ENCODE measurements at regions of chr10 and their contacts with region 1.

Region 1: DNA sequence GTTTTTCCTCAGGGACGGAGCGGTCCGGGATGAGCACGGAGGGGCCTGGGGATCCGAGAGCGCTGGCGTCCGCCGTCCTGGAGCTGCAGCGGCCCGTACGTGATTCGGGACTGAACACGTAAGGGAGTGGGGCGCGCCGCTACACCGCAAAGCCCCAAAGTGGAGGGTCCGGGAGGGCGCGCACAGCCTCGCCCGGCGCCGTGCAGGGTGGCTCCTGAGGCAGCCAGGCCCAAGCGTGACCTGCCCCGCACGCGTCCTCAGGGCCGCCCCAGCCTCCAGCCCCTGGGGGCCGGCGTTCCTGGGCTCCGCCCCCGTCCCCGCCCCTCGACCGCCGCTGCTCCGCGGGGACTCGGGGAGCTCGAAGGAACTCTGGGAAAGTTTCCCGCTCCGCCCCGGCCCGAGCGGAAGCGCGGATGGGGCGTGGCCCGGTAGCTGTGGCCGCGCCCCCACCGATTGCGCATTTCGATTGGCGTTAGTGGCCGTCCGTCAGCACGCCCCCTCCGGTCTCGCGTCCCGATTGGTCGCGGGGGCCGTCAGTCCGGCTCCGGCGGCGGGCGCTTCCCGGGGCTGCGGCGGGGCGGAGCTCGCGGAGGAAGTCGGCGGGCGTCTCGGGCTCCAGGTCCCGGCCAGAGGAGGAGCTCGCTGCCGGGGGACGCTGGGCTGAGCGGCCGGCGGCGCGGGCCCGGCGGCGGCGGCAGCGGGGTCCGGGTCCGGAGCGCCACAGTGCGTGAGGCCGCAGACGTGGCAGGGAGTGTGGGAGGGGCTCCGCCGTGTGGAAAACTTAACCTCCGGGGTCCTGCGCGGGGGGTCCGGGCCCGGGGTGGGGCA is at the starts of genes ANKRD16 and FBH1:
- DNase-seq: peak; percentile 78
- ATAC-seq: peak; percentile 92
- H3K4me3 ChIP-seq: peak within 1 kb of the TSS; percentile 96
- H3K27ac ChIP-seq: peak within 1 kb of the TSS; percentile 73
- H3K4me1 ChIP-seq: peaks cover 14% of the 10 kb centered on the region
- H3K27me3 ChIP-seq: no peaks in the 10 kb centered on the region
- CTCF ChIP-seq: peak in 1 of 3 experiments; percentile 2; a peak in 1 of 6 replicates
- EP300 ChIP-seq: no peak
- POLR2A ChIP-seq: peak; percentile 95
- RAD21 ChIP-seq: no peak
- polyA plus RNA-seq, gene ANKRD16: 1.4 to 2.9 TPM
- polyA plus RNA-seq, gene FBH1: 6.1 to 19.0 TPM

Region 2: GRCh38 chr10:5854106-5854570 is 35.7 kb before region 1 on chr10:
- CTCF ChIA-PET with region 1: interaction called, 3 read pairs
- POLR2A ChIA-PET with region 1: interaction called, 5 read pairs
- RAD21 ChIA-PET with region 1: interaction called, 28 read pairs
- SMC1A ChIA-PET with region 1: interaction called, 4 read pairs
- in situ Hi-C with region 1: no loop called
- intact Hi-C with region 1: no loop called
- DNase-seq: no peak
- ATAC-seq: no peak
- H3K4me3 ChIP-seq: no peak overlapping the region
- H3K27ac ChIP-seq: no peak overlapping the region
- H3K4me1 ChIP-seq: peaks cover 8% of the 10 kb centered on the region
- H3K27me3 ChIP-seq: no peaks in the 10 kb centered on the region; a peak in 1 of 4 replicates
- CTCF ChIP-seq: no peak
- EP300 ChIP-seq: no peak
- POLR2A ChIP-seq: no peak
- RAD21 ChIP-seq: no peak

Region 3: GRCh38 chr10:5862360-5862961 is 27.4 kb before region 1 on chr10:
- CTCF ChIA-PET with region 1: interaction called, 3 read pairs
- POLR2A ChIA-PET with region 1: interaction called, 17 read pairs
- RAD21 ChIA-PET with region 1: interaction called, 4 read pairs
- SMC1A ChIA-PET with region 1: interaction called, 6 read pairs
- in situ Hi-C with region 1: no loop called
- intact Hi-C with region 1: no loop called
- DNase-seq: peak; percentile 94
- ATAC-seq: peak; percentile 96
- H3K4me3 ChIP-seq: peak overlapping the region; percentile 34
- H3K27ac ChIP-seq: peak overlapping the region; percentile 73
- H3K4me1 ChIP-seq: peaks cover 20% of the 10 kb centered on the region
- H3K27me3 ChIP-seq: no peaks in the 10 kb centered on the region
- CTCF ChIP-seq: no peak
- EP300 ChIP-seq: peak; percentile 74 to 88; a peak in 2 of 4 replicates
- POLR2A ChIP-seq: peak; percentile 46; the same call in 1 of the 2 replicates
- RAD21 ChIP-seq: no peak

Region 4: DNA sequence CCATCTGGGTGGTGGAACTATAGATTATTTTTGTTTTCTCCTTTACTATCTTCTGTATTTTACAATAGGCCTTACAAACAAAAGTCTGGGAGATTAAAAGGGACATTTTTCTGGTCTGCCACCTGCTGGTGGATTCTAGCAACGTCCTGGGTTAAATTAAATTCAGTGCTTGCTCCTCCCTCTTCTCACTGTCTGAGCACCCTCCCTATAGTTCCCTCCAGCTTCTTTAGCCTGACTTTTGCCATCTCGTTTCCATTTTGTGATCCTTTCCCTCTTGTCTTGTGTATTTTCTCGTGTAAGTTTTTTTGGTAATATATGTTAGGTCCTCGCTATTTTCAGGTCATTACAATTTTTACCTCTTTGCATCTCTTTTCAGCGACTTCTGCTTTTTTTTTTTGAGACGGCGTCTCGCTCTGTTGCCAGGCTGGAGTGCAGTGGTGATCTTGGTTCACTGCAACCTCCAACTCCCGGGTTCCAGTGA is 16.3 kb before region 1 on chr10:
- CTCF ChIA-PET with region 1: interaction called, 24 read pairs
- POLR2A ChIA-PET with region 1: interaction called, 5 read pairs
- RAD21 ChIA-PET with region 1: interaction called, 13 read pairs
- SMC1A ChIA-PET with region 1: interaction called, 24 read pairs
- in situ Hi-C with region 1: no loop called
- intact Hi-C with region 1: no loop called
- DNase-seq: peak; percentile 59
- ATAC-seq: peak; percentile 98
- H3K4me3 ChIP-seq: peak overlapping the region; percentile 26; the same call in 1 of the 2 replicates
- H3K27ac ChIP-seq: 0 out of 2 replicates have a peak overlapping the region, but pooled peaks have one; percentile 18
- H3K4me1 ChIP-seq: peaks cover 3% of the 10 kb centered on the region
- H3K27me3 ChIP-seq: no peaks in the 10 kb centered on the region
- CTCF ChIP-seq: peak; percentile 64 to 73 (median 66)
- EP300 ChIP-seq: no peak
- POLR2A ChIP-seq: no peak
- RAD21 ChIP-seq: peak; percentile 71

Region 5: GRCh38 chr10:5904227-5904626 is 14.4 kb after region 1 on chr10:
- CTCF ChIA-PET with region 1: interaction called, 5 read pairs
- POLR2A ChIA-PET with region 1: interaction called, 4 read pairs
- RAD21 ChIA-PET with region 1: interaction called, 10 read pairs
- SMC1A ChIA-PET with region 1: interaction called, 14 read pairs
- in situ Hi-C with region 1: no loop called
- intact Hi-C with region 1: no loop called
- DNase-seq: peak; percentile 68
- ATAC-seq: peak; percentile 96
- H3K4me3 ChIP-seq: 0 out of 2 replicates have a peak overlapping the region, but pooled peaks have one; percentile 39
- H3K27ac ChIP-seq: peak overlapping the region; percentile 91
- H3K4me1 ChIP-seq: peaks cover 18% of the 10 kb centered on the region
- H3K27me3 ChIP-seq: no peaks in the 10 kb centered on the region
- CTCF ChIP-seq: no peak
- EP300 ChIP-seq: 0 out of 4 replicates have a peak, but pooled peaks of 1 of the 2 experiments have one; percentile 11
- POLR2A ChIP-seq: no peak
- RAD21 ChIP-seq: no peak

Region 6: DNA sequence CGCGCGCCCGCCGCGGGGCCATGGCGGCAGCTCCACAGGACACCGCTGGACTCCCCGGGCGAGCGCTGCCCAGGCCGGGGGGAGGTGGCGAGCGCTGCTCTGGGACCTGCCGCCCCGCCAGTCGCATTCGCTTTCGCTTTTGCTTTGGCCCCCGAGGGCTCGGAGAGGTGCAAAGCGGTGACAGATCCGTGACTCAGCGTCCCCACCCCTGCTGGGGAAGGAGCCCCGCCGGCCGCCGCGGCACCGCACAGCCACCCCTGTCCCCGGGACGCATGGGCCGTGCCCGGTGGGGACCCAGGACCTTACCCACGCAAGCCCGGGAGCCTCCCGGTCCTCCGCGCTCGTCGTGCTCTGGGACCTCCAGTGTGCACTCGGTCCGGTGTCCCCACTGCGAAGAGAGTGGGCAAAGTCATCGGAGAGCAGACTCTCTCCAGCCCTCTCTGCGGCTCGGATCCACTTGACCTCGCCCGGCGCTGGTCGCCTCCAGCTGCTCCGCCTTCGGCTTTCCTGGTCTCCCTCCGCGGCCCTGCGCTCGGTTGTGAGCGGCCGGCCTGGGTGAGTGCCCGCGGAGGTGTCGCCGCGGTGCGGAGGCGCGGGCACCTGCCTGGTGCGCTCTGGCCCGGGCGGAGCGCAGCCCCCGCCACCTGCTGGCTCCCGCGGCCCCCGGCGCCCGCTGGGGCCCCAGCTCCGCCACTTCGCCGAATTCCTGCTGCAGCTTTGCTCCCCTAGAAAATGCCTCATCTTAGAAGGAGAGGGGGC is 87.8 kb after region 1 on chr10 and contains the start of gene IL15RA:
- CTCF ChIA-PET with region 1: interaction called, 12 read pairs
- POLR2A ChIA-PET with region 1: interaction called, 23 read pairs
- RAD21 ChIA-PET with region 1: interaction called, 29 read pairs
- SMC1A ChIA-PET with region 1: interaction called, 17 read pairs
- in situ Hi-C with region 1: no loop called
- intact Hi-C with region 1: loop called (anchors 5 kb)
- DNase-seq: no peak
- ATAC-seq: peak; percentile 78
- H3K4me3 ChIP-seq: peak within 1 kb of the TSS; percentile 95
- H3K27ac ChIP-seq: peak within 1 kb of the TSS; percentile 88
- H3K4me1 ChIP-seq: peaks cover 12% of the 10 kb centered on the region
- H3K27me3 ChIP-seq: no peaks in the 10 kb centered on the region; a peak in 1 of 4 replicates
- CTCF ChIP-seq: peak; percentile 22 to 54 (median 30); a peak in 5 of 6 replicates
- EP300 ChIP-seq: no peak
- POLR2A ChIP-seq: peak; percentile 65
- RAD21 ChIP-seq: peak; percentile 21; the same call in 1 of the 2 replicates
- polyA plus RNA-seq, gene IL15RA: 2.0 to 4.2 TPM

Region 7: DNA sequence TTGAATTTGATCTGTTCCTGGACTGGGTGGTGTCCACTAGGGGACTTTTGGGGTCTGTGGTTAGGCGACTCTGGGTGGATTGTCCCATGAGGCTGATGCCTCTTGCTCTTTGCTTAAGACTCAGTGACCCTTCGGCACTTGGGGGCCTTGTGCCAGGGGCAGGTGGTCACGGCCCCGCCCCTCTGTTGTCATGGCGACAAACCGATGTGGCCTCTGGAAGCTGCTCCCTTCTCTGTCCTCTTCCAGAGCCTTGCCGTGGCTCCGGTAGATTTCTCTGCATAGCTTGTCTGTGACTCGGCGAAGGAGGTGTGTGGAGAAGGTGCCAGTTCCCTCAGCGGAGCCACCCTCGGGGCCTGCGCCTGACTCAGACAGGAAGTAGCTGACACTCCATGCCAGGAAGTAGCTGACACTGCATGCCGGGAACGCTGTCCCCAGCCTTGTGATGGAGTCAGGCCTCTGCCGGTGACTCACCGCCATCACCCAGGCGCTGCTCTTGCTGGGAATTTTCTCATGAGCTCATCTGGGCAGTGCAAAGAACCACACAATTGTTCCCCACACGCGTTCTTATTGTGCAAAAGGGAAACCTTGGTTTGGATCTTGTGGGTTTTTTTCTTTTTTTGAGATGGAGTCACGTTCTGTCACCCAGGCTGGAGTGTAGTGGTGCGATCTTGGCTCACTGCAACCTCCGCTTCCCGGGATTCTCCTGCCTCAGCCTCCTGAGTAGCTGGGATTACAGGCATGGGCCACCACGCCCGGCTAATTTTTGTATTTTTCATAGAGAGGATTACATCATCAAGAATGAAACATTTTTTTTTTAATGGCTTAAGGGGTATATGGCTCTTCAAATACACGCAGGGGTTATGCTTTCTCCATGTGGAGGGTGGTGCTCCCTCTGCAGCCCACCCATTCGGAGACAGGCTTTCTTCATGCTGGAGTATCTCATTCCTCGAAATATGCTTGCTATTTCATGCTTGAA is 385.5 kb after region 1 on chr10:
- CTCF ChIA-PET with region 1: no interaction called
- POLR2A ChIA-PET with region 1: no interaction called
- RAD21 ChIA-PET with region 1: no interaction called
- SMC1A ChIA-PET with region 1: no interaction called
- in situ Hi-C with region 1: no loop called
- intact Hi-C with region 1: no loop called
- DNase-seq: peak; percentile 49
- ATAC-seq: peak; percentile 77
- H3K4me3 ChIP-seq: peak overlapping the region; percentile 10; the same call in 1 of the 2 replicates
- H3K27ac ChIP-seq: peak overlapping the region; percentile 51
- H3K4me1 ChIP-seq: peaks cover 28% of the 10 kb centered on the region
- H3K27me3 ChIP-seq: peaks cover 0 to 1% of the 10 kb centered on the region in 2 experiments; a peak in 1 of 4 replicates
- CTCF ChIP-seq: 0 out of 6 replicates have a peak, but pooled peaks of 1 of the 3 experiments have one; percentile 2
- EP300 ChIP-seq: 0 out of 4 replicates have a peak, but pooled peaks have one; percentile 51 to 52
- POLR2A ChIP-seq: peak; percentile 77
- RAD21 ChIP-seq: peak; percentile 10; the same call in 1 of the 2 replicates

Measured in GM12878 (cell line).